Common myeloid progenitor, CD34-positive (primary cell): ENCODE measurements at regions of chr3 and their contacts with region 1.

Region 1: GRCh38 chr3:117439812-117440211 is 730.2 kb downstream of the TUSC7 start:
- DNase-seq: peak; percentile 71 to 80 (median 76)
- H3K4me3 ChIP-seq: no peak overlapping the region
- H3K27ac ChIP-seq: no peak overlapping the region
- H3K4me1 ChIP-seq: peaks cover 0 to 5% (median 0%) of the 10 kb centered on the region in 4 experiments
- H3K27me3 ChIP-seq: no peaks in the 10 kb centered on the region

Region 2: DNA sequence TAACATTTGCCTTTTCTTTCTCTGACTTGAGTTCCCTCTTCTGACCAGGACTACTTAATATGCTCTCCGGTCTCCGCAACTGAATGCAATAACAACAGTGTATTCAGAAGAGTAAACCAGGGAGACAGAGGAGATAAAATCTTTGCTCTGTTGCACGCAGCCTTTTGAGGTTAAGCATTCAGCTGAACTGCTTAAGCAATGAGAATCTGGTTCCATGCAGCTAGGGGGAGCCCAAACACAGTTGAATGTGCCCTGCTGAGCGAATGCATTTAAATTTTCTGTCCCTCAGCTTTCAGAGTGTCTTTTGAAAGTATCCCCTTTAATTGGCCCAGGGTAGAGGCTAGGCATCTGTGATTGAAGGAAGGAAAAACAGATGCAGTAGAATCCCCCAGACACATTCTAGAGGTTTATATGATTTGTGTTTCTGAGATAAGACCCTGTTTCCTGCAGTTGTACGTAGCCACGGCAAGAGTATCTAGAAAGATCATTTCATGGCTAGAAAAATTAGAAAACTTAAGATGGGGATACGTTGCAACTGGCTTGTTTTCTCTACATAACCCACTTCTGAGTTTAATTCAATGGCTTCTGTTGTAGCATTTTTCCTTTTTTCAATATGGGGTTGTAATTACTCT is 420.6 kb before region 1 on chr3:
- CTCF ChIA-PET with region 1: interaction called, 13 read pairs
- POLR2A ChIA-PET with region 1: no interaction called
- DNase-seq: peak; percentile 77 to 90 (median 90)
- H3K4me3 ChIP-seq: peak overlapping the region in 2 of 7 experiments; percentile 41 to 45
- H3K27ac ChIP-seq: no peak overlapping the region
- H3K4me1 ChIP-seq: peaks cover 0 to 11% (median 4%) of the 10 kb centered on the region in 4 experiments
- H3K27me3 ChIP-seq: peaks cover 0 to 13% (median 6%) of the 10 kb centered on the region in 5 experiments

Region 3: GRCh38 chr3:117059067-117059955 is 380.5 kb before region 1 on chr3:
- CTCF ChIA-PET with region 1: interaction called, 42 read pairs
- POLR2A ChIA-PET with region 1: no interaction called
- DNase-seq: peak; percentile 33 to 42 (median 40)
- H3K4me3 ChIP-seq: no peak overlapping the region
- H3K27ac ChIP-seq: no peak overlapping the region
- H3K4me1 ChIP-seq: peaks cover 0 to 22% (median 11%) of the 10 kb centered on the region in 4 experiments
- H3K27me3 ChIP-seq: no peaks in the 10 kb centered on the region

Region 4: GRCh38 chr3:117165601-117166051 is 274.2 kb before region 1 on chr3:
- CTCF ChIA-PET with region 1: no interaction called
- POLR2A ChIA-PET with region 1: no interaction called
- DNase-seq: no peak
- H3K4me3 ChIP-seq: no peak overlapping the region
- H3K27ac ChIP-seq: no peak overlapping the region
- H3K4me1 ChIP-seq: no peaks in the 10 kb centered on the region
- H3K27me3 ChIP-seq: no peaks in the 10 kb centered on the region

Region 5: GRCh38 chr3:117407317-117407716 is 32.5 kb before region 1 on chr3:
- CTCF ChIA-PET with region 1: interaction called, 109 read pairs
- POLR2A ChIA-PET with region 1: no interaction called
- DNase-seq: peak; percentile 33 to 63 (median 63)
- H3K4me3 ChIP-seq: no peak overlapping the region
- H3K27ac ChIP-seq: no peak overlapping the region
- H3K4me1 ChIP-seq: peaks cover 10 to 51% (median 31%) of the 10 kb centered on the region in 4 experiments
- H3K27me3 ChIP-seq: no peaks in the 10 kb centered on the region

Region 6: DNA sequence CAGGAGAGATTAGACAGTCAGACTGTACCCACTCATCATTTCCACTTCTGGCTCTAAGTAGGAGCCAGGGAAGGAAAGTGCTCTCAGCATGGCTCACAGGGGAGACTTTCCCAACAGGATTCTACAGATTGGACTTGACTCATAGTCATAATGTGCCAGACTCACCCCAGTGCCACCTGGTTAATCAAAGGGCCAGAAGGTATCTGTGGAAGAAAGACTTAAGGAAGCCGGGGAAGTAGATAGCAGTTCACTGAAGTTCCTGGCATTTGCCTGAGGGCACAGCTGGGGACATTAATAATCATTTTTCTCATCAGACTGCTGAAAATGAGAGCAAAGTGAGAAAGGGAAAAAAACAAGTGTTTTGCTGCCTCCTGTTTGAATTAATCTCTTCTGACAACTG is 12.7 kb before region 1 on chr3:
- CTCF ChIA-PET with region 1: interaction called, 12 read pairs
- POLR2A ChIA-PET with region 1: no interaction called
- DNase-seq: no peak
- H3K4me3 ChIP-seq: no peak overlapping the region
- H3K27ac ChIP-seq: no peak overlapping the region
- H3K4me1 ChIP-seq: peaks cover 5 to 34% (median 19%) of the 10 kb centered on the region in 4 experiments
- H3K27me3 ChIP-seq: no peaks in the 10 kb centered on the region